ENCODE measurements at regions of chr17 and their contacts with region 1.

Region 1: DNA sequence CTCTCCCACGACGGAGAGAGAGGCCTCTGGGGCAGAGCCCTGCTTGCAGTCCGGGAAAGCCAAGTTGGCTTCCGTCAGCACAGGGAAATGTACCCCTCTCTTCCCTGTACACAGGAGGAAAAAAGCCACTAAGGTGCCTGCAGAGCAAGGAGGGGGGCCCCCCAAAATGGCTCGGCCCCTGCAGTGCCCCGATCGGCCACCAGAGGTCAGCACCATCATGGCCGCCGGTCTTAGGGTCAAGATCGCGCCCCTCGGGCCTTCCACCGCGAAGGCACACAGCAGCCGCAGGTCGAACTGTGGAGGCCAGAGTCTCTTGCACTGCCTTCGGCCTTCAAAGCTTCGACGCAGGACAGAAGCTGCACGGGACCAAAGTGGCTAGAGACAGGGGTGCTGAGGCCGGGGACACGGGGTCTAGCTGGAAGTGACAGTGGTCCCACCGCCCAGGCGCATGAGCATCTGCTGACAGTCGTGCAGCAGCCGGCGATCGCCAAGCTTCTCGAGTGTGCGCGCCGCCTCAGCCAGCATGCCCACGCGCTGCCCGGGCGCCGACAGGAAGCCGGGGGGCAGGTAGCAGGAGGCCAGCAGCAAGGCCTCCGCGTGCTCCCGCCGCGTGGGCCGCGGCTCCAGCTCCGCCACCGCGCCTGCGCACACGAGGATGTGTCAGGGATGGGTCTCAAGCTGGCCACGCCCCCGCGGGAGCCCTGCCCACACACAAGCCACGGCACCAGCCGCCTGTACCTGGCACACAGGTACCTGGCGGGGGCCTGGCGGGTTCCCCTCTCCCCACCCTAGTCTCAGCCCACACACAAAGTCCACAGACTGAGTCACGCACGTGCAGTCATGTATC is 24.4 kb downstream of the SREBF1 start:
- DNase-seq: peak; percentile 74 to 89 (median 77)
- ATAC-seq: peak; percentile 21 to 46 (median 40)
- H3K4me3 ChIP-seq: no peak overlapping the region
- H3K27ac ChIP-seq: peak overlapping the region in 6 of 12 donors; percentile 3 to 71 (median 21)
- H3K4me1 ChIP-seq: peaks cover 9 to 82% (median 30%) of the 10 kb centered on the region in 12 donors
- H3K27me3 ChIP-seq: no peaks in the 10 kb centered on the region
- CTCF ChIP-seq: peak in 11 of 12 donors; percentile 99 to 100 (median 100)
- POLR2A ChIP-seq: no peak

Region 2: DNA sequence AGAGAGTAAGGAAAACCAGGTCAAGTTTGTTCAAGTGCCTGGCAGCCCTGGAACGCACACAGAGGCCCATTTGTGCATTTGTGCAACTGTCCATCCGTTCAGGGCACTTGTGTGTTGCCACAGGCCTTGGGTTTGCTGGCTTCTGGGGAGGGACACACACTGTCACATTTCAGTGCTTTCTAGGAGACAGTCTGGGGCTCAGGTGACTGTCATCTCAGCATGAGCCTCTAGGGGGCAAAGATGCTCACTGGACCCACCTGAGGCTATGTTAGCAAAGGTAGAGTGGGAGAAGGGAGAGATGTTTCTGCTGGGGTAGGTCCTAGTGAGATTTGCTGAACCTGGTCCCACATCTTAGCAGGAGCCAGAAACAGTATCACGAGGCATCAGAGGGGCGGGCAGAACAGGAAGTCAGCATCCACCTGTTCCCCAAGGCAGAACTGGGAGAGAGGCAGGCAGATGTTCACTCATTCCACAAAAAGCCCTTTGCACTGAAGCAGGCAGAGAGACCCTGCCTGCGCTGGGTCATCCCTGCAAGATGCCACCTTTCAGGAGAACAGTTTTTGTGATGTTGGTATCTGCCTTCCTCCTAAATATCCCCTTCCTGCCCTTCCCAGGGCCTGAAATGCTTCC is 82.7 kb before region 1 on chr17:
- intact Hi-C with region 1: no loop called
- DNase-seq: no peak
- ATAC-seq: peak in 2 of 4 donors; percentile 27 to 30
- H3K4me3 ChIP-seq: no peak overlapping the region
- H3K27ac ChIP-seq: peak overlapping the region in 4 of 12 donors; percentile 16 to 55 (median 28)
- H3K4me1 ChIP-seq: peaks cover 0 to 63% (median 38%) of the 10 kb centered on the region in 12 donors
- H3K27me3 ChIP-seq: no peaks in the 10 kb centered on the region
- CTCF ChIP-seq: peak; percentile 35 to 55 (median 44)
- POLR2A ChIP-seq: no peak

Region 3: GRCh38 chr17:17859909-17860765 is 47.7 kb after region 1 on chr17:
- intact Hi-C with region 1: loop called (anchors 1 to 2 kb)
- DNase-seq: peak; percentile 79 to 91 (median 85)
- ATAC-seq: peak; percentile 93 to 98 (median 96)
- H3K4me3 ChIP-seq: no peak overlapping the region
- H3K27ac ChIP-seq: peak overlapping the region in 8 of 12 donors; percentile 21 to 60 (median 47)
- H3K4me1 ChIP-seq: peaks cover 0 to 34% (median 15%) of the 10 kb centered on the region in 12 donors
- H3K27me3 ChIP-seq: no peaks in the 10 kb centered on the region
- CTCF ChIP-seq: peak; percentile 95 to 99 (median 98)
- POLR2A ChIP-seq: no peak

Measured in heart left ventricle (tissue), 16 donors.